ENCODE measurements at regions of chr1 and their contacts with region 1.

Region 1: DNA sequence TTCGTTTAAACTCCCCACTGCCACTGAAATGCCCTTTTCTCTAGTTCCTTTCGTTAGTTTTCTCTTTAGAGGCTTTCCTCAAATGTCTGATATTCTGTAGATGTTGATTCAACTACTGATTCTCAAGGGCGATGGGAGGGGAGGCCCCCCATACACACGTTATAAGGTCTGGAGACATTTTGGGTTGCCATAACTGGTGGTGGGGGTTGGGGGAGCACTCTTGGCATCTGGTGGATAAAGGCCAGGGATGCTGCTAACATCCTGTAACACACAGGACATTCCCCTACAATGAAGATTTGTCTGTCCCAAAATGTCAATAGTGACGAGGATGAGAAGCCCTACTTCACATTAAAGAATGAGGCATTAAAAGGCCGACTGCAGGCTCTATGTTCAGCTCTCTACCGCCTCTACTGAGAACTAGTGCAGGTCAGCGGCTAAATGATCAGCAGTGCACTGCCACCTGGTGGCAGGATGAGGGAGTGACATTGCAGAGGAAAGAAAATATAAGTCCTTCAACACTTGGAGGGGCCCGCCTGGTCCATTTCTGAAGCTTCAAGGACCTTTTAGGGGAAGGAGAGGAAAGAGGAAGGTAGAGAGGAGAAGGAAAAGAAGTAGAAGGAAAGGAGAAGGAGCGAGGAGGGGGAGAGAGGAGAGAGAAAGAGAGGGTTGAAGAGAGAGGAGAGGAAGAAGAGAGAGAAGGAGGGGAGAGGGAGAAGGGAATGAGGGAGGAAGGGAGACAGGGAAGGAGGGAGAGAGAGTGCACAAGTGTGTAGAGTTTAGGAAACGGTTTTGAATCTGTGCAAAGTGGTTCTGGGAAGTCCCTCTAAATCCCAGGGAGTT is 29.4 kb downstream of the ALG14 start:
- DNase-seq: peak; percentile 67 to 83 (median 72)
- H3K4me3 ChIP-seq: no peak overlapping the region
- H3K4me3 Mint-ChIP-seq: no peak overlapping the region
- H3K27ac ChIP-seq: no peak overlapping the region
- H3K27ac Mint-ChIP-seq: no peak overlapping the region
- H3K4me1 ChIP-seq: peaks cover 5 to 6% of the 10 kb centered on the region in 2 donors
- H3K4me1 Mint-ChIP-seq: peaks cover 5% of the 10 kb centered on the region
- H3K27me3 ChIP-seq: no peaks in the 10 kb centered on the region
- H3K27me3 Mint-ChIP-seq: peaks cover 0 to 3% (median 1%) of the 10 kb centered on the region in 3 donors
- CTCF ChIP-seq: peak; percentile 97

Region 2: GRCh38 chr1:94854458-94855306 is 188.7 kb before region 1 on chr1:
- intact Hi-C with region 1: loop called (anchors 5 kb)
- DNase-seq: peak; percentile 71 to 81 (median 80)
- H3K4me3 ChIP-seq: peak overlapping the region in 2 of 3 experiments; percentile 7 to 71
- H3K4me3 Mint-ChIP-seq: no peak overlapping the region
- H3K27ac ChIP-seq: no peak overlapping the region
- H3K27ac Mint-ChIP-seq: no peak overlapping the region
- H3K4me1 ChIP-seq: peaks cover 5 to 7% of the 10 kb centered on the region in 2 donors
- H3K4me1 Mint-ChIP-seq: no peaks in the 10 kb centered on the region
- H3K27me3 ChIP-seq: peaks cover 8 to 11% of the 10 kb centered on the region in 2 donors
- H3K27me3 Mint-ChIP-seq: peaks cover 8 to 14% (median 10%) of the 10 kb centered on the region in 3 donors
- CTCF ChIP-seq: peak; percentile 82

Region 3: DNA sequence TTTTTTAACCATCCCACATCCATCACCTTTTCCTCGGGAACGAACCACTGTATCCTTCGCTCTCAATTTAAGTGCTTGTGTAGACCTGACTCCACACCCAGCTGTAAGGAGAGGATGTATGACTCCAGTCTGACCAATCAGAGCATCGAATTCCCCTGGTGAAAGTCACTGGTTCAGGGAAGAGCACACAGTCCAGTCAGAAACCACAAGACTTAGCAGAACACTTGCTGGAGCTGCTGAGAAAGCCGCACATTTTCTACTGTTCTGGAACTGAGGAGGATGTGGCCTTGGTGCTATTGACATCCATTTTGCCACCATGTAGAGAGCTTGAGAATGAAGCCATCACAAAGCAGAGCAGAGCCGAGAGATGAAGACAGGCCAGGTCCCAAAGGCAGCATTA is 56.6 kb before region 1 on chr1:
- intact Hi-C with region 1: no loop called
- DNase-seq: no peak
- H3K4me3 ChIP-seq: no peak overlapping the region
- H3K4me3 Mint-ChIP-seq: no peak overlapping the region
- H3K27ac ChIP-seq: no peak overlapping the region
- H3K27ac Mint-ChIP-seq: peak overlapping the region in 2 of 7 donors; percentile 3 to 32
- H3K4me1 ChIP-seq: no peaks in the 10 kb centered on the region
- H3K4me1 Mint-ChIP-seq: no peaks in the 10 kb centered on the region
- H3K27me3 ChIP-seq: no peaks in the 10 kb centered on the region
- H3K27me3 Mint-ChIP-seq: no peaks in the 10 kb centered on the region
- CTCF ChIP-seq: no peak